ENCODE measurements at regions of chr3 and their contacts with region 1.

Region 1: GRCh38 chr3:71821116-71821515 is 36.2 kb upstream of the PROK2 start:
- DNase-seq: no peak
- H3K4me3 ChIP-seq: no peak overlapping the region
- H3K27ac ChIP-seq: no peak overlapping the region
- H3K4me1 ChIP-seq: no peaks in the 10 kb centered on the region
- H3K27me3 ChIP-seq: no peaks in the 10 kb centered on the region
- CTCF ChIP-seq: no peak
- EP300 ChIP-seq: no peak
- POLR2A ChIP-seq: no peak

Region 2: DNA sequence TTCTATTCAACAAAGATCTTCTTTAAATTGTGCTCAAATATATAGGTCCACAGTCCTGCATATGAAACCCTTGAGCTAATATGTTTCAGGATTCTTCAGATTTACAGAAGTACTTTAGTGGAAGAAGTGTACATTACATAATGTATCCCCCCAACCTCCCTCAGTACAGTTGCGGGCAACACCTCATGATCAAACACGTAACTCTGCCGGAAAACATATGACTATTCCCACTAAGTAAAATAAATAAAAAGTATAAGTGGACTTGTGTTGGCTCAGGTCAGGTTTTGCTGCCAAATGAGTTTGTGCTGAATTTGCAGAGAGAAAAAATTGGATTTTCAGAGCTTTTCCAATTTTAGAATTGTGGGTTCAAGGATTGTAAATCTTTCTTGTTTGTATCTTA is 1241.1 kb before region 1 on chr3:
- in situ Hi-C with region 1: no loop called
- intact Hi-C with region 1: no loop called
- DNase-seq: no peak
- H3K4me3 ChIP-seq: no peak overlapping the region
- H3K27ac ChIP-seq: no peak overlapping the region
- H3K4me1 ChIP-seq: no peaks in the 10 kb centered on the region
- H3K27me3 ChIP-seq: no peaks in the 10 kb centered on the region
- CTCF ChIP-seq: no peak
- EP300 ChIP-seq: no peak
- POLR2A ChIP-seq: no peak

Region 3: GRCh38 chr3:71172951-71173350 is 648.2 kb before region 1 on chr3:
- in situ Hi-C with region 1: no loop called
- intact Hi-C with region 1: no loop called
- DNase-seq: no peak
- H3K4me3 ChIP-seq: no peak overlapping the region
- H3K27ac ChIP-seq: no peak overlapping the region
- H3K4me1 ChIP-seq: peaks cover 0 to 20% (median 5%) of the 10 kb centered on the region in 4 donors
- H3K27me3 ChIP-seq: no peaks in the 10 kb centered on the region
- CTCF ChIP-seq: no peak
- EP300 ChIP-seq: no peak
- POLR2A ChIP-seq: no peak

Region 4: DNA sequence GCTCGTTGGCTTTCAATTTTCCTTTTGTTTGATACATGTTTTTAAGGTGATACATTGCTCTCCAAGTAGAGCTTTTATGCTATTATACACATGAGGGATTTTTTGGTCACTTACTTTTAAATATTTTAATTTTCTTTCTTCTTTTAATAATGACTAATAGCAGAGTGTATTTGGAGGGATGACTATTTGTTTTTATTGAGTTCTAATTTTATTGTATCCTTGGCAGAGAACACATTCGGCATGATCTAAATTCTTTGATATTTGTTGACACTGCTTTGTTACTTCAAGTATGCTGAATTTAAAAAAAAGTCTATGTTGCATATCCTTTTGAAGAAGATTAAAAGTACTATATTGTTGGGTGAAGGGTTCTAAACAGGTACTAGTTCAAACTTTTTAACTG is 1953.5 kb after region 1 on chr3:
- in situ Hi-C with region 1: no loop called
- intact Hi-C with region 1: loop called (anchors 5 kb)
- DNase-seq: no peak
- H3K4me3 ChIP-seq: no peak overlapping the region
- H3K27ac ChIP-seq: no peak overlapping the region
- H3K4me1 ChIP-seq: no peaks in the 10 kb centered on the region
- H3K27me3 ChIP-seq: no peaks in the 10 kb centered on the region
- CTCF ChIP-seq: no peak
- EP300 ChIP-seq: no peak
- POLR2A ChIP-seq: no peak

Measured in transverse colon (tissue), 4 donors.